Left colon (tissue), 2 donors: ENCODE measurements at regions of chr14 and their contacts with region 1.

Region 1: GRCh38 chr14:77053046-77053841 is 24.7 kb upstream of the IRF2BPL start:
- DNase-seq: peak; percentile 67 to 82
- ATAC-seq: peak; percentile 66

Region 2: DNA sequence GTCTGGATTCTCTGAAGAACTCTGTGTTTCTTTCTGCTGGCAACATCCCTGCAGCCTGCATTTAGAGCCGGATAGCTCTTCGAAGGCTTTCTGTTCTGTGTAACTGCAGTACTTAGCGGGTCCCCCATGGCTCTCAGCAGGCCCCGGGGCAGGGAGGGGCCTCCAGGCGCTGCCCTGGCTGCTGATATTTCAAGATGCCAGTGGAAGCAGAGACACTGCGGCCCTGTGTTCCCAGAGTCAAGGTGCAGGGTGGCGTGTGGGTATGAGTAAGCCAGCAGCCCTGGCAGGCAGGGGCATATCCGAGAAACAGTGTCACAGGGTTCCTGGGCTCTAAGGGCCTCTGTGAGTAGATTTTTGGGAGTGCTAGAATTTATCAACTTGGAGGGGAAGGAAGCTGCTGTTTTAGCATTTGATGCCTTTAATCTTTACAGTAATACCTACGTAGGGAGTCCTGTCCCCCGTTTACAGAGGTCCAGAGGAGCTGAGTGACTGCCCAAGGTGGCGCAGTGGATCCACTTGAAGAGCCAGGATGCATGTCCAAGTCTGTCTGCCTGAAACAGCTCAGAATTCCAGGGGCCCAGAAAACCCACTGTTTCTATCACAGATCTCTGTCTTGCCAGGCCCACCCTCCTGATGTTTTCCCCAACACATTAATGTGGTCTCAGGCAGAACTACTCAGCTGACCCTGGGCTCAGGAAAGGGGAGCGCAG is 661.1 kb before region 1 on chr14:
- intact Hi-C with region 1: no loop called
- DNase-seq: no peak
- ATAC-seq: no peak

Region 3: DNA sequence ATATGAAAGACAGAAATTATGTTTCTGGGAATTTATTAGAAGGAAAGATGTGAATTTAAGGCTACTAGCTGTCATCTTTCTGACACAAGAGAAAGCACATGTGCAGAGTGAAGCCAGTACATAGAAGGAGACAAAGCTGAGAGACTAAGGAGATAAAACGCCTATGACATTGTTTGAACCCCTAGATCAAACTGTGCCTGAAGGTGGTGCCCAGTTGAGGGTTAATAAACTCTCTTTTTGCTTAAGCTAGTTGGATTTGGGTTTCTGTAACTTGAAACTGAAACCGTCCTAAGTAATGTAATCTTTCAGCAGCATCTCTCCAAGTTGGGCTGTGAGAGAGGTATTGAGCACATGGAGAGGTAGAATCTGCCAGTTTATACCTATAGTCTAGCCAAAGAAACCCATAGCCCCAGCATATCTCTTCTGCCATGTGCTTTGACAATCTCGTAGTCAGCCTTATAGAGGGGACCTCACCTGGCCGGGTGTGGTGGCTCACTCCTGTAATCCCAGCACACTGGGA is 142.8 kb before region 1 on chr14:
- intact Hi-C with region 1: loop called (anchors 5 to 10 kb)
- DNase-seq: no peak
- ATAC-seq: no peak

Region 4: DNA sequence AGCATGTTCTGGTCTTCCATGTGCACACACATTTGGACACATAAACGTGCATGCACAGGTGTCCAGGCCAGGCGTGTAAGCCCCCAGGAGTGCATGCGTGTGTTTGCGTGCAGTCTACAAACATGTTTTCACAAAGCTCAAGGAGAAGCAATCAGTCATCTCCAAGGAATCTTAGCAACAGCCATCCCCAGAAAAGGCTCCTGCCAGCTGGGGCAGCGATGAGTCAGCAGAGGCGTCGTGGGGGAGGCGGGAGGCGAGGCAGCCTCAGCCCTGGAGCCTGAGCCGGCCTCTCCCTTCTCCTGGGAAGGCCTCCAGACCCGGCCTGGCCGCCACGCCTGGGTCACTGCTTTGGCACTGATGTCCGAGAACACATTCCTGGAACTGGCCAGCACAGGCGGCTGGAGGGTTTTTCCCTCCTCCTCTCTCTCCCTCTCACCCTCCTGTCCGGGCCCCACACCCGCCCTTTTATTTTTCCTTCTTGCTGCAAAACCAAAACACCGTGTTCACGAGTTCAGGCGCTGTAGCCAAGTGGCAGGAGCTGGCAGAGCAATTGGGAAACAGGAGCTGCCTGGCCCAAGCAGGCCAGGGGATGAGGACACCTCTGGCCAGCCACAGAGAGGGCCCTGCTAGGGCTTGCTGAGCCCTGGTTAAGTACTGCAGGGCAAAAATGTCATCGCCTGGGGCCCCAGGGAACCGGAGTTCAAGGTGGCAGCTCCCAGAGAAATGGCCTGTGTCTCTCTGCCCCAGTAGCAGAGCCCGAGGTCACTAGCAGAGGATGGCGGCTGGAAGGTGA is 134.3 kb before region 1 on chr14:
- intact Hi-C with region 1: loop called (anchors 5 to 10 kb)
- DNase-seq: peak; percentile 85 to 91
- ATAC-seq: peak; percentile 87